ENCODE measurements at regions of chr22 and their contacts with region 1.

Region 1: GRCh38 chr22:45553351-45554039 is 50.8 kb downstream of the FBLN1 start:
- DNase-seq: peak; percentile 78 to 89 (median 82)
- H3K4me3 ChIP-seq: no peak overlapping the region
- H3K27ac ChIP-seq: peak overlapping the region in 4 of 5 donors; percentile 41 to 87 (median 70)
- H3K4me1 ChIP-seq: peaks cover 6 to 35% of the 10 kb centered on the region in 2 donors
- H3K27me3 ChIP-seq: no peaks in the 10 kb centered on the region
- CTCF ChIP-seq: peak; percentile 85 to 91 (median 87)
- POLR2A ChIP-seq: no peak

Region 2: DNA sequence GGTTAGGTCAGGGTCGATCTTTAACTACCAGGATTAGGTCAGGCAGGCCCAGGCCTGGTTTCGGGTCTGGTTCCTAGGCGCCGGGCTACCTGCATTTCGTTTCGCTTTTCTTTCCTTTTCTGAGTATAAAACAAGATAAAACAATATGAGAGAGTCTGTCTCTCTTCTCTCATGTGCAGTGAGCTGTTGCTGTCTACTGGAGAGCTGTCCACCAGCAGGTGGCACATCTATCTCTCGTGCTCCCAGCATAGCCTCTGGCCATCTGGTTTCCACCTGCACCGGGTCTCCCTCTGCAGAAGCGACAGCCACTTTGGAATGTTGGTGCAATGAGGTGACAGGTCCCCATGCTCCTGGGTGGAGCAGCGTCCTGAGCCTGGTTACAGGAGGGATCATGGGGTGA is 112.4 kb before region 1 on chr22:
- intact Hi-C with region 1: loop called (anchors 5 kb)
- DNase-seq: peak; percentile 40 to 77 (median 58)
- H3K4me3 ChIP-seq: no peak overlapping the region
- H3K27ac ChIP-seq: no peak overlapping the region
- H3K4me1 ChIP-seq: no peaks in the 10 kb centered on the region
- H3K27me3 ChIP-seq: peaks cover 4% of the 10 kb centered on the region
- CTCF ChIP-seq: peak; percentile 32 to 64 (median 55)
- POLR2A ChIP-seq: no peak

Region 3: DNA sequence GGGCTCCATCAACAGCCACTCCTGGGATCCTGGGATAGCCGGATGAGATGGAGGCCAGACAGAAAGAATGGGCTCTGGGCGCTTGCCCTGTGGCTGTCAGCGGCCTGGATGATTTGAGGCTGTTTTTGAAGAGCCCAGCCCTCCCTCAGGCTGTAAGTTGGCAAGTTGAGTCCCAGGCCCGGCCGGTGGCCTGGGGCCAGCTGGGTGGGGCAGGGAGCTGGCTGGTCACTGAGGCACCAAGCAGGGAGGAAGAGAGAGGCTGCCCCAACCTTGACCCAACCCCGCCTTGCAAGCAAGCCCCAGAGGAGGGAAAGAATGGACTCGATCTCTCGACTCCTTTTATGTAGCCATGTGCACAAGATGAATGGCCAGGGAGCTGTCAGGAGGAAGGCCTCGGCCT is 105.1 kb before region 1 on chr22:
- intact Hi-C with region 1: loop called (anchors 5 kb)
- DNase-seq: peak in 1 of 7 donors; percentile 21
- H3K4me3 ChIP-seq: no peak overlapping the region
- H3K27ac ChIP-seq: peak overlapping the region in 1 of 5 donors; percentile 16
- H3K4me1 ChIP-seq: no peaks in the 10 kb centered on the region
- H3K27me3 ChIP-seq: no peaks in the 10 kb centered on the region
- CTCF ChIP-seq: no peak
- POLR2A ChIP-seq: no peak

Region 4: GRCh38 chr22:45502215-45503049 is 51.1 kb before region 1 on chr22 and contains the start of gene FBLN1:
- intact Hi-C with region 1: no loop called
- DNase-seq: no peak
- H3K4me3 ChIP-seq: peak within 1 kb of the TSS in 1 of 4 donors; percentile 57
- H3K27ac ChIP-seq: peak within 1 kb of the TSS in 4 of 5 donors; percentile 28 to 87 (median 44)
- H3K4me1 ChIP-seq: no peaks in the 10 kb centered on the region
- H3K27me3 ChIP-seq: peaks cover 32% of the 10 kb centered on the region
- CTCF ChIP-seq: no peak
- POLR2A ChIP-seq: no peak
- total RNA-seq, gene FBLN1: 13.0 to 387 (median 229) TPM

Region 5: GRCh38 chr22:45863981-45864751 is 310.7 kb after region 1 on chr22:
- intact Hi-C with region 1: no loop called
- DNase-seq: peak in 6 of 7 donors; percentile 46 to 66 (median 52)
- H3K4me3 ChIP-seq: no peak overlapping the region
- H3K27ac ChIP-seq: no peak overlapping the region
- H3K4me1 ChIP-seq: peaks cover 11 to 13% of the 10 kb centered on the region in 2 donors
- H3K27me3 ChIP-seq: peaks cover 27% of the 10 kb centered on the region
- CTCF ChIP-seq: peak; percentile 58 to 76 (median 68)
- POLR2A ChIP-seq: no peak

Measured in adrenal gland (tissue), 19 donors.